ENCODE measurements at regions of chr18 and their contacts with region 1.

Region 1: GRCh38 chr18:45664824-45665763 is 49.8 kb downstream of the SLC14A2 start:
- DNase-seq: peak; percentile 82
- H3K4me3 Mint-ChIP-seq: no peak overlapping the region
- H3K27ac Mint-ChIP-seq: no peak overlapping the region
- H3K4me1 Mint-ChIP-seq: peaks cover 52% of the 10 kb centered on the region
- H3K27me3 Mint-ChIP-seq: no peaks in the 10 kb centered on the region

Region 2: DNA sequence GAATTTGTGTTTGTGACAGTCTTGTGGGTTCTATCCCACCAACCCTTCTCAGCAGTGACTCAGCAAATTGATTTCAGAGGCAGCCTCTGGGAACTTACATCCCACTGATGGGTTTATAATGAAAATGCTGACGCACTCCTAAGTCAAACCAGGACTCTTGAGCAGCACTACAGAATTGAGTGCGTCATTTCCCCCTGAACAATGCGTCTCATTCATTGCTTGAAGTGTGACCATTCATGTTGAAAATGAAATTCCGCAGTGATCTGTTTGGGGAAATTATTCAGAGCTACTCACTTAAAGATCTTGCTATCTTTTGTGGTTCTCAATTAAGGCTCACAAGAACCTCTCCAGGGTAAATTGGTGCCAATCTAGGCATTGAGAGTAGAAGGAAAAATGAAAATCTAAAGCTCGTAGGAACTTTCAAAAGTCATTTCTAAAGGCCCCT is 467.5 kb before region 1 on chr18:
- CTCF ChIA-PET with region 1: no interaction called
- intact Hi-C with region 1: no loop called
- DNase-seq: peak; percentile 18
- H3K4me3 Mint-ChIP-seq: no peak overlapping the region
- H3K27ac Mint-ChIP-seq: no peak overlapping the region
- H3K4me1 Mint-ChIP-seq: no peaks in the 10 kb centered on the region
- H3K27me3 Mint-ChIP-seq: peaks cover 6% of the 10 kb centered on the region

Region 3: GRCh38 chr18:45677276-45677807 is 12.2 kb after region 1 on chr18:
- CTCF ChIA-PET with region 1: interaction called, 20 read pairs
- intact Hi-C with region 1: no loop called
- DNase-seq: no peak
- H3K4me3 Mint-ChIP-seq: no peak overlapping the region
- H3K27ac Mint-ChIP-seq: no peak overlapping the region
- H3K4me1 Mint-ChIP-seq: peaks cover 3% of the 10 kb centered on the region
- H3K27me3 Mint-ChIP-seq: no peaks in the 10 kb centered on the region

Region 4: GRCh38 chr18:45722899-45723298 is 57.8 kb after region 1 on chr18:
- CTCF ChIA-PET with region 1: interaction called, 39 read pairs
- intact Hi-C with region 1: loop called (anchors 1 kb)
- DNase-seq: peak; percentile 87
- H3K4me3 Mint-ChIP-seq: no peak overlapping the region
- H3K27ac Mint-ChIP-seq: no peak overlapping the region
- H3K4me1 Mint-ChIP-seq: no peaks in the 10 kb centered on the region
- H3K27me3 Mint-ChIP-seq: peaks cover 5% of the 10 kb centered on the region

Region 5: GRCh38 chr18:45839414-45840395 is 174.6 kb after region 1 on chr18:
- CTCF ChIA-PET with region 1: interaction called, 11 read pairs
- intact Hi-C with region 1: loop called (anchors 1 kb)
- DNase-seq: peak; percentile 49
- H3K4me3 Mint-ChIP-seq: no peak overlapping the region
- H3K27ac Mint-ChIP-seq: no peak overlapping the region
- H3K4me1 Mint-ChIP-seq: peaks cover 11% of the 10 kb centered on the region
- H3K27me3 Mint-ChIP-seq: peaks cover 28% of the 10 kb centered on the region